Activated CD8-positive, alpha-beta memory T cell treated with anti-CD3 and anti-CD28 coated beads, Interleukin-2, amount 10 ng/mL, durations not matched to agents 7 days and 5 days (primary cell): ENCODE measurements at regions of chr1 and their contacts with region 1.

Region 1: DNA sequence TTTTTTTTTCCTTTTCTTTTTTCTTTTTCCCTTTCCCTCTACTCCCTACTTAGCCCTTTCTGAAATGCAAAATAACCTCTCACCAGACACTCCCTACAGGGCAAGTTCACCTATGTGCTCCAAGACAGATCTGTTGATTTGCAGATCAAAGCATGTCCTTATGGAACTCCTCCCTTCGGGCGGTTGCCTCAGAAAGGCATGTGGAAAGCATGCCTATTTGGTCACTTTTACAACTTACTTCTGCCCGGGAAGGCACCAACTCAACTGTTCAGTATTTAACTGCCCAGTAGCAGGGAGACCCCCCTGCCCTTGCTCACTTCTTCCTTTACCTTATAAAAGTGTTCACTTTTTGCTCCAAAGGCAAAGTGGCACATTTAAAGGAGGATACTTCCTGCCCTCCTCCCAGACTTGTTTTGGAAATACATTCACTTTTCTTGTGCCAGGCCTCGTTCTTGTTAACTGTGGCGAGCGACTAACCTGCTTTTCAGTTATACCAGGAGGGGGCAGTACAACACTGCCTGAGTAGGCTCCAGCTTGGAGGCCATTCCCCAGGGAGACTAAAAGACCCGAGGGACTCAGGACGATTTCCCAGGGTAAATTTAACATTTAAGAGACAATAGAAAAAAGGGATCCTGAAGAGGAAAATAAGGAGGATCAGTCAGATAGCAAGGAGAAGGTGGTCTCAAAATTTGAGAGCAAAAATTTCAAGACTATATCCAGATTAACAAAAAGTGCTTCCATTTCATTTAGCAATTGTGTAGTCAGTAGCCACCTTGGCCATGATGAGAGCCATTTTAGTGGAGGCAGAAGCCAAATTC is 12.3 kb upstream of the SLAMF7 start:
- DNase-seq: peak; percentile 83
- ATAC-seq: peak; percentile 75
- H3K4me3 Mint-ChIP-seq: no peak overlapping the region
- H3K27ac Mint-ChIP-seq: no peak overlapping the region
- H3K4me1 Mint-ChIP-seq: peaks cover 24% of the 10 kb centered on the region
- H3K27me3 Mint-ChIP-seq: no peaks in the 10 kb centered on the region

Region 2: GRCh38 chr1:160647329-160647720 is 79.4 kb before region 1 on chr1:
- CTCF ChIA-PET with region 1: no interaction called
- DNase-seq: no peak
- ATAC-seq: peak; percentile 12
- H3K4me3 Mint-ChIP-seq: peak overlapping the region; percentile 97
- H3K27ac Mint-ChIP-seq: peak overlapping the region; percentile 92
- H3K4me1 Mint-ChIP-seq: peaks cover 61% of the 10 kb centered on the region
- H3K27me3 Mint-ChIP-seq: no peaks in the 10 kb centered on the region

Region 3: DNA sequence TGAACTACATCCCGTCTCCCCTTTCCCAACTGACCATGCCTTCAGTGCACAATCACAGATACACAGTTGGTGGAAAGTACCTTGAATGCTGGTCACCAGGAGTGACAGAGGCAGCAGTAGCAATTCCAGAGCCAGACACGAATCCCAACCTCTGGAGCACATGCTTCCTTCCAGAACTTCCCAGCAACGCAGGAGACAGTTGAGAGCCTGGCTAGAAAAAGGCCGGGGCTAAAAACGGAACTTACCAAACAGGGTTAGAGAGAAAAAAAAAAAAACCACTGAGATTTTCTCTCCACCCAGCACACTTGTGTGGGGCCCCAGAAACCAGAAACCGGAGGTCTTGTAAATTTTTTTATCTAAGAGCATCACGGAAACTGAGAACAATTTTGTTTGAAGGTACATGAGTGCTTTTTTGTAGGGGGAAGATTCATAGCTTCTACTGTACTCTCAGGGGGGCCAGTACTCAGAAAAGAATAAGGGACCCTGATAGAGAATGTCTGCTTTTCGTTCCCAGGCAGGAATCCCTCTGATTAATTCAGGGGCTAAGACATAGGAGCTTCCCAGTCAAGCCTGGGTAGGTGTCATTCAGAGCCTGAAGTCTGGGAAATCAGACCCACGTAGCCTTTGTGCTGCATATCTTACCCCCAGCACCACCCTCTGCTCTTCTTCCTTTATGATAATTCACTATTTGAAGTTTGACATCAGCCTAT is 14.9 kb before region 1 on chr1 and contains the start of gene CD48:
- CTCF ChIA-PET with region 1: interaction called, 79 read pairs
- DNase-seq: peak; percentile 79
- ATAC-seq: peak; percentile 48
- H3K4me3 Mint-ChIP-seq: no peak within 1 kb of the TSS
- H3K27ac Mint-ChIP-seq: no peak within 1 kb of the TSS
- H3K4me1 Mint-ChIP-seq: peaks cover 27% of the 10 kb centered on the region
- H3K27me3 Mint-ChIP-seq: no peaks in the 10 kb centered on the region
- total RNA-seq, gene CD48: 304 to 332 TPM

Region 4: DNA sequence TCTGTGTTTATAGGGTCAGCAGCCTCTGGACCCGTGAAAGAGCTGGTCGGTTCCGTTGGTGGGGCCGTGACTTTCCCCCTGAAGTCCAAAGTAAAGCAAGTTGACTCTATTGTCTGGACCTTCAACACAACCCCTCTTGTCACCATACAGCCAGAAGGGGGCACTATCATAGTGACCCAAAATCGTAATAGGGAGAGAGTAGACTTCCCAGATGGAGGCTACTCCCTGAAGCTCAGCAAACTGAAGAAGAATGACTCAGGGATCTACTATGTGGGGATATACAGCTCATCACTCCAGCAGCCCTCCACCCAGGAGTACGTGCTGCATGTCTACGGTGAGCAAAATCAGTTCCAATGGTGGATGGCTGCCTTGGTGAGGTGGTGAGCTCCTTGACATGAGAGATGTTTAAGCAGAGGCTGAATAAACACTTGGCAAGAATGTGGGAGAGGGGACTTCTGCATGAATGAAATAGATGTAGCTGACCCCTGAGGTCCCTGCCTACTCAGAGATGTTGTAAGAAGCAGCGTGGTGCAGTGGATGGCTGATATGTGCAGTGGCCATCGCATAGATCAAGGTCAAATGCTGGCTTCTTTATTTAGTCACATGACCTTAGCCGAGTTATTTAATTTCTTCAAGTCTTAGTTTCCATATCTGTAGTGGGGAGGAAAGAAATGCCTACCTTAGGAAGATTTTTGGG is 21.6 kb after region 1 on chr1:
- CTCF ChIA-PET with region 1: interaction called, 70 read pairs
- DNase-seq: no peak
- ATAC-seq: no peak
- H3K4me3 Mint-ChIP-seq: no peak overlapping the region
- H3K27ac Mint-ChIP-seq: peak overlapping the region; percentile 3
- H3K4me1 Mint-ChIP-seq: peaks cover 93% of the 10 kb centered on the region
- H3K27me3 Mint-ChIP-seq: no peaks in the 10 kb centered on the region

Region 5: DNA sequence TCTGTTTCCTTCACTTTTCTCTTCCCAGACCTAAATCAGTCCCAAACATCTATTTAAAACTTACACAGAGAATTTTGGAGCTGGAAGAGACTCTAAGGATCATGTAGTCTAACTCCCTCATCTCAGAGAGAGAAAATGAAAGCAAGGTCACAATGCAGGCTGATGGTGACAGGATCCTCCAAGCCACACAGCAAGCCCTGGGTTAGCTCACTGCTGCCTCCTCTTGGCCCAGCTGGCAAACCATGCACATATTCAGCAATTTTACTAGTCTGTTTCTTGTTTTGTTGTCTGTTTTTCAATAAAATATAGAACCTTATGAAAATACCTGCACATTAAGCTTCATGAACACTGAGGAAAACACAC is 41.6 kb after region 1 on chr1:
- CTCF ChIA-PET with region 1: interaction called, 292 read pairs
- DNase-seq: peak; percentile 94
- ATAC-seq: peak; percentile 95
- H3K4me3 Mint-ChIP-seq: peak overlapping the region; percentile 78
- H3K27ac Mint-ChIP-seq: peak overlapping the region; percentile 91
- H3K4me1 Mint-ChIP-seq: peaks cover 32% of the 10 kb centered on the region
- H3K27me3 Mint-ChIP-seq: no peaks in the 10 kb centered on the region

Region 6: GRCh38 chr1:160830321-160831153 is 103.8 kb after region 1 on chr1:
- CTCF ChIA-PET with region 1: interaction called, 38 read pairs
- DNase-seq: peak; percentile 81
- ATAC-seq: peak; percentile 70
- H3K4me3 Mint-ChIP-seq: no peak overlapping the region
- H3K27ac Mint-ChIP-seq: no peak overlapping the region
- H3K4me1 Mint-ChIP-seq: peaks cover 18% of the 10 kb centered on the region
- H3K27me3 Mint-ChIP-seq: no peaks in the 10 kb centered on the region

Region 7: DNA sequence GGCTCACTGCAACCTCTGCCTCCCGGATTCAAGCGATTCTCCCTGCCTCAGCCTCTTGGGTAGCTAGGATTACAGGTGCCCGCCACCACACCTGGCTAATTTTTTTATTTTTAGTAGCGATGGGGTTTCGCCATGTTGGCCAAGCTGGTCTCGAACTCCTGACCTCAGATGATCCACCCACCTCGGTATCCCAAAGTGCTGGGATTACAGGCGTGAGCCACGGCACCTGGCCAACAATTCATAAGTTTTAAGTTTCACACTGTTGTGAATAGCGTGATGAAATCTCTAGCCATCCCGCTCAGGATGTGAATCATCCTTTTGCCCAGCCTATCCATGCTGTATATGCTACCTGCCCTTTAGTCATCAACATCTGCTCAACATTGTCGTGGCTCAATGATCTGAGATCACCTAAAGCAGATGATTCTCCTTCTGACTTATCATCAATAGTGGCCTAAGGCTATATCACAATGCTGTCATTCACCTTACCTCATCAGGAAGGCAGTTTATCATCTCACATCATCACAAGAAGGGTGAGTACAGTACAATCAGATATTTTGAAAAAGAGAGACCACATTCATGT is 388.5 kb after region 1 on chr1:
- CTCF ChIA-PET with region 1: no interaction called
- DNase-seq: peak; percentile 54
- ATAC-seq: peak; percentile 18
- H3K4me3 Mint-ChIP-seq: peak overlapping the region; percentile 93
- H3K27ac Mint-ChIP-seq: peak overlapping the region; percentile 52
- H3K4me1 Mint-ChIP-seq: peaks cover 70% of the 10 kb centered on the region
- H3K27me3 Mint-ChIP-seq: no peaks in the 10 kb centered on the region